ENCODE measurements at regions of chr11 and their contacts with region 1.

Region 1: DNA sequence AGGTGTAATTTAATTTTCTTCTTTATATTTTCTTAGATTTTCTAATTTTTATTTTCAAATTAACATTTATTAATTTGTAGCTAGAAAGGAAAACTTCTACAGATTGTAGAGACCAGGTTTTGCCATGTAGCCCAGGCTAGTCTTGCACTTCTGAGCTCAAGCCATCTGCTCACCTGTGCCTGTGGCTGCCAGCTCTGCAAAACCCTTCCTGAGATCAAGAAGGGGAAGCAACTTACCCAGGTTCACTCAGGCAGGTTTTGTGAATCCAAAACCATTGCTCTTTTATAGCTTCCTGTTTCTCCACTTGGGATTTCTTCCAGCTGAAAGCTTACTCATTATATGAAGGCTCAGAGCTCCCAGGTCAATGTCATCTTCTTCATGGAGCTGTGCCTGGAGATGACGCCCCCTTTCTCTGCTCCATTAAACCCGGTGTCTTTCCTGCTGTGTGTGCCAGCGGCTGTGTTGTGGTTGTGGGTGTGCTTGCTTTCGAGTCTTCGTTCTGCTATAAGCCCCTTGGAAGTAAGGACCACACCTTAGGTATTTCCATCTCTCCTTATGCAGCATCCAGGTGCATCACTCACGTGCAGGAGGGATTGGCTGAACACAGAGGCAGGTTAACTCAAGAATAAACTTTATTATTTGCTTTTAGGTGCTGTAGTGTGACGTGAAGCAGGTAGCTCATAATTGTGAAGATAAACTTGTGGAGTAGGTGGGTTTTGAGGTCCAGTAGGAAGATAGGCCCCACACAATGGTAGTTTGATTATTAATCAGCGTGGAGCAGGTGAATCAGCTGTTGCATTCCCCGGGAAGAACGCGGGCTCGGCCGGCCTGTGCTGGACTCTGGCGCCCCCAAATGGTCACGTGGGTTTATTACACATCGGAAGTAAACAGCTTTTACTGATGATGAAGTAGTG is 42.2 kb upstream of the INCENP start:
- DNase-seq: peak; percentile 90
- H3K4me3 Mint-ChIP-seq: no peak overlapping the region
- H3K27ac Mint-ChIP-seq: no peak overlapping the region
- H3K4me1 Mint-ChIP-seq: peaks cover 6% of the 10 kb centered on the region
- H3K27me3 Mint-ChIP-seq: peaks cover 4% of the 10 kb centered on the region

Region 2: GRCh38 chr11:61792310-61793085 is 289.1 kb before region 1 on chr11 and contains the starts of genes FEN1 and TMEM258:
- CTCF ChIA-PET with region 1: interaction called, 50 read pairs
- POLR2A ChIA-PET with region 1: no interaction called
- intact Hi-C with region 1: no loop called
- DNase-seq: peak; percentile 92
- H3K4me3 Mint-ChIP-seq: peak within 1 kb of the TSS; percentile 88
- H3K27ac Mint-ChIP-seq: peak within 1 kb of the TSS; percentile 99
- H3K4me1 Mint-ChIP-seq: peaks cover 47% of the 10 kb centered on the region
- H3K27me3 Mint-ChIP-seq: no peaks in the 10 kb centered on the region
- total RNA-seq, gene FEN1: 108 to 111 TPM
- total RNA-seq, gene TMEM258: 191 to 192 TPM

Region 3: DNA sequence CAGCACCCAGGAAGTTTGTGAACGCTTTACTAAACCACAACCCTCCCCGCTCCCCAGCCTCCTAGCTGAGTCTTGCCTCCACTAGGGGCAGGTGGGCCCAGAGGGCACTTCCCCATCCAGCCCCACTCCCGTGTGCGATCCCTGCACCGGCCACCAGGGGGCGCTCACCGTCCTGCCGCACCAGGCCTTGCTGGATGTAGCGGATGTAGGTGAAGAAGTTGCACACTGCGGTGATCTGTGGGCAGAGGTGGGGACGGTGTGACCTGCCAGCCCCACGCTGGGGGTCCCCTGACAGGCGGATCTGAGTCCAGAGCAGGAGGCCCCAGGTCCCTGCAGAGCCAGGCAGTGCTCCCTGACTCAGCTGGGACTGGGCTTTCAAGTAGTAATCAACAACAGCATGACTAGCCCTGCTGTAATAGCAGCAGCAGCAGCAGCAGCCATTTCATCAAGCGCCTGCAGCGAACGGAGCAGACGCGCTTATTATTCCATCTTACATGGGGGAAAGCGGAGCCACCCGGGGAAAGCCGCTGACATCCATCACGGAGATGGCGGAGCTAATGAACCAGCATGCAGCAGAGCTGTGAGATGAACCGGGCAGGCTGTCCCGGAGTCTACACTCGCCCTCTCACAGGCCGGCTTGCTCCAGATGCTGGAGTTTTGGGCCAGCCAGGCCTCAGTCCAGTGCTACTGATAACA is 182.3 kb before region 1 on chr11:
- CTCF ChIA-PET with region 1: interaction called, 417 read pairs
- POLR2A ChIA-PET with region 1: interaction called, 3 read pairs
- intact Hi-C with region 1: loop called (anchors 1 kb)
- DNase-seq: peak; percentile 94
- H3K4me3 Mint-ChIP-seq: no peak overlapping the region
- H3K27ac Mint-ChIP-seq: no peak overlapping the region
- H3K4me1 Mint-ChIP-seq: peaks cover 7% of the 10 kb centered on the region
- H3K27me3 Mint-ChIP-seq: no peaks in the 10 kb centered on the region

Region 4: GRCh38 chr11:61947486-61948210 is 134.0 kb before region 1 on chr11:
- CTCF ChIA-PET with region 1: interaction called, 111 read pairs
- POLR2A ChIA-PET with region 1: no interaction called
- intact Hi-C with region 1: loop called (anchors 1 kb)
- DNase-seq: peak; percentile 80
- H3K4me3 Mint-ChIP-seq: no peak overlapping the region
- H3K27ac Mint-ChIP-seq: no peak overlapping the region
- H3K4me1 Mint-ChIP-seq: no peaks in the 10 kb centered on the region
- H3K27me3 Mint-ChIP-seq: peaks cover 2% of the 10 kb centered on the region

Region 5: DNA sequence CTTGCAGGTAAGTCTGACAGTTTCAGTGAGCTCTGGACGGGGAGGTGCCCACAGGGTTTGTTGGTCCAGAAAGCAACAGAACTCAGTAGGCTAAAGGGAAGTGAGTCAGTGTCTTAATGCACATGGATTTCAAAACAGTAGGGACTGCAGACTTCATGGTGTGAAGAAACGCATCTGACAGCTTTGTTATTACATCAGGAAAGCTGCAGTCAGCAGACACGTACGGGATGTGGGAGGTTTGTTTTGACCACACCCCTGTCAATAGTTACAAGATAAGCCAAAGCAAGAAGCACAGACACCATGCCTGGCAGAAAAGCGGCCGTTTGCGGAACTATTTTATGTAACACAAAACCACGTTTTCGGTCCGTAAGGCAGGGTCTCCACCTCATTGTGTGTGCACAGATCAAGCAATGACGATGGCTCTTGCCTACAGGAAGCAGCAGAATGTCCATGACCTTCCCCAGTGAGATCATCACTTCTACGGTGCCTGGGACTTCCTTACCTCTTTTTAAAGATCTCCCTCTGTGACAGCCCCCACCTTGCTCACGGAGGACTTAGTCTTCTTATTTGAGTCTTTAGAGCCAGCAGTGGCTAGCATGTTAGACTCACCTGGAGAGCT is 56.0 kb before region 1 on chr11:
- CTCF ChIA-PET with region 1: interaction called, 12 read pairs
- POLR2A ChIA-PET with region 1: no interaction called
- intact Hi-C with region 1: no loop called
- DNase-seq: peak; percentile 84
- H3K4me3 Mint-ChIP-seq: peak overlapping the region; percentile 51
- H3K27ac Mint-ChIP-seq: peak overlapping the region; percentile 87
- H3K4me1 Mint-ChIP-seq: peaks cover 20% of the 10 kb centered on the region
- H3K27me3 Mint-ChIP-seq: no peaks in the 10 kb centered on the region

Region 6: DNA sequence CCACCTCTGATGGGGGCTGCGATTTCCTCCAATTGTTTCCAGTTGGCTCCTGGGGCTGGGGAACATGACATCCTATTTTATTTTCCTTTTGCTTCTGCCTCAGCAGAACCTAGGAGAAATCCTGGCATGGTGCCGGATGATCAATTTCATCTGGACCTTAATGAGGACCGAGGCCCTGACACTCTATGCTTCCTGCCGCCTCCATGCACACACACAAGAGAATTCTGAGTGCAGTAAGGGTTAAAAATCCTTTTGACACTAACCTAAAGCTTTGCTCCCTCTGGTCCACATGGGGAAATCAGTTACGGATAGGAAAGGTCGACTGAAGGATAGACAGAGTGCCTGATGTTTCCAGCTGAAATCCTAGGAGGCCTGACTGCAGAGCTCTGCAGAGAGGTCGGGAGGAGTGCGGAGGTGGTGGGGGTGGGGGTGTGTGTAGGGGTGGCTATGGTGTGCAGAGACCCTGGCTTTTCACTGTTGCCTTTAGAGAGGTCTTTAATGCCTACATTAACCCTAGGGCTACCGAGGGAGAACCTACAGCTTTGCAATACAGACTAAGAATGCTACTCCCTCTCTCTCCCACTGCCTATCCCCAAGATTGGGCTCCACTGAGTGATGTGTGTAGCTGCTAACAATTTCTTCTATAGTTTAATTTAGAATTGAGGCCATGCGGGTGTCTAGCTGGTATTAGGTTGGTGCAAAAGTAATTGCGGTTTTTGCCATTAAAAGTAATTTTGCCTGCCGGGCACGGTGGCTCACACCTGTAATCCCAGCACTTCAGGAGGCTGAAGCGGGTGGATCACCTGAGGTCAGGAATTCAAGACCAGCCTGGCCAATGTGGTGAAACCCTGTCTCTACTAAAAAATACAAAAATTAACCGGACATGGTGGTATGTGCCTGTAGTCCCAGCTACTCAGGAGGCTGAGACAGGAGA is 11.4 kb before region 1 on chr11:
- CTCF ChIA-PET with region 1: interaction called, 23 read pairs
- POLR2A ChIA-PET with region 1: no interaction called
- intact Hi-C with region 1: no loop called
- DNase-seq: no peak
- H3K4me3 Mint-ChIP-seq: no peak overlapping the region
- H3K27ac Mint-ChIP-seq: no peak overlapping the region
- H3K4me1 Mint-ChIP-seq: peaks cover 15% of the 10 kb centered on the region
- H3K27me3 Mint-ChIP-seq: peaks cover 4% of the 10 kb centered on the region

Region 7: GRCh38 chr11:62487738-62488551 is 406.3 kb after region 1 on chr11:
- CTCF ChIA-PET with region 1: no interaction called
- POLR2A ChIA-PET with region 1: no interaction called
- intact Hi-C with region 1: no loop called
- DNase-seq: no peak
- H3K4me3 Mint-ChIP-seq: no peak overlapping the region
- H3K27ac Mint-ChIP-seq: no peak overlapping the region
- H3K4me1 Mint-ChIP-seq: no peaks in the 10 kb centered on the region
- H3K27me3 Mint-ChIP-seq: no peaks in the 10 kb centered on the region